ENCODE measurements at regions of chr1 and their contacts with region 1.

Region 1: GRCh38 chr1:203504397-203505250 is 10.7 kb downstream of the OPTC start:
- DNase-seq: peak; percentile 64
- H3K4me3 Mint-ChIP-seq: no peak overlapping the region
- H3K27ac Mint-ChIP-seq: no peak overlapping the region
- H3K4me1 Mint-ChIP-seq: peaks cover 7% of the 10 kb centered on the region
- H3K27me3 Mint-ChIP-seq: peaks cover 9% of the 10 kb centered on the region

Region 2: DNA sequence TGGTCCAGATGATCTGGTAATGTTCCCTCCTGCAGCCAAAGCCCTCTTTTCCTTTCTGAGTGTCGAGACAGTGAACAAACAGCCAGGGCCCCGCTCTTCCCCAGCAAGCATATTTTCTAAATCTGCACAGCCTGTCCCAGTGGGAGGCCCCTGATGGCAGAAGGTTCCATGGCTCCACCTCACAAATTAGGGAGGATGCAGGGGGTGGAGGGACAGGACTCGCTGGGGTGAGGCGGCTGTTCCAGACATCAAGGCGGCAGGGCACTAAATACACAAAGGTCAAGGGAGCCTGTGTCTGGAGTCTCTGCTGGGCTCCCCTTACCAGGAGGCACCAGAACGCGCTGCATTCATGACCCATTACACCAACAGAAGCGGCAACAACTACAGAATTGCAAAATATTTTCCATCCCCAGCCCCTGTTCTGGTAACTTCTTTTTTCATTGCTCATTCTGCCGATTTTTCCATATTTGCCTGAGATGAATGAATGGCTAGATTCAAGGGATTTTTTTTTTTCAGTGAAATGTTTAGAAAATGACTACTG is 56.0 kb before region 1 on chr1:
- intact Hi-C with region 1: no loop called
- DNase-seq: no peak
- H3K4me3 Mint-ChIP-seq: no peak overlapping the region
- H3K27ac Mint-ChIP-seq: no peak overlapping the region
- H3K4me1 Mint-ChIP-seq: no peaks in the 10 kb centered on the region
- H3K27me3 Mint-ChIP-seq: peaks cover 28% of the 10 kb centered on the region

Region 3: GRCh38 chr1:203702130-203702577 is 197.5 kb after region 1 on chr1:
- intact Hi-C with region 1: loop called (anchors 1 kb)
- DNase-seq: peak; percentile 36
- H3K4me3 Mint-ChIP-seq: no peak overlapping the region
- H3K27ac Mint-ChIP-seq: peak overlapping the region; percentile 59
- H3K4me1 Mint-ChIP-seq: peaks cover 12% of the 10 kb centered on the region
- H3K27me3 Mint-ChIP-seq: no peaks in the 10 kb centered on the region

Region 4: DNA sequence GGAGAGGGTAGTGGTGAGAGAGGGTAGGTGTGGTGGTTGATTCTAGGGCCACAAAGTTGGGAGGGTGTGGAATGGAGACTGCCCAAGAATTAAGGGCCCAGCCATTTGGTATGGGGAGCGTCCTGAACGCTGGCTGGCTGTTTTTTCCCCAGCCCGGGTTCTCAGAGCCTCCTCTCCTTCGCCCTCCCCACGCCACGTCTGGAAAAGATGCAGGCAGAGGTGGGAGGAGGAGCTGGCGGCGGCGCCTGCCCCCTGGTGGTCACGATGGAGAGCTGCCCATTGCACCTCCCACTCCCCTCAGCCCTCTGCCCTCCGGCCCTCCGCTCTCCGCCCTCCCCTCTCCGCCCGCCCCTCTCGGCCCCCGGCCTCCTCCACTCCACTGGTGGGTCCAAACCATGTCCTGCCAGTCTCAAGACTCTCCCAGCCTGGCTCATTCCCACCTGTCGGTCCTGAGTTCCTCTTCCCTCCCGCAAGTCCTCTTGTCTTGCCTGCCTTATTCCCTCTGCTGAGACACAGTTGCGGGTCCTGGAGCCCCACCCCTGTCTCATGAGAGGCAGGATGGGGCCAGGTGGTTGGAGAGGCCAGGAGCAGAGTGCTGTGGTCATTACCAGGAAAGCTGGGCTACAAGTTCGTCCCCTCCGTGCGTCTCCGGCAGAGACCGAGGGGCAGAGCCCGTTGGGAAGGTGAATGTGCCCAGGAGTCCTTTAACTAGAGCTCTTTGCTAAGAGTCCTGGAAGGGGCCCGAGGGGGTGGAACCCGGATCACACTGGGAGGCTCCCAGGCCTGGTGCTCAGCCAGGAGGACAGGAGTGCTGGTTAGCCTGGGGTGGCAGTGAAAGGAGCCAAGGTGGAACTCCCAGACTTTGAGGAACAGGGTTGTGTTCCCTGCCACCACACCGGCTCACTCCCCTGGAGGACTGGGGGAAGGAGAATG is 624.6 kb after region 1 on chr1:
- intact Hi-C with region 1: loop called (anchors 10 kb)
- DNase-seq: peak; percentile 53
- H3K4me3 Mint-ChIP-seq: no peak overlapping the region
- H3K27ac Mint-ChIP-seq: no peak overlapping the region
- H3K4me1 Mint-ChIP-seq: peaks cover 9% of the 10 kb centered on the region
- H3K27me3 Mint-ChIP-seq: no peaks in the 10 kb centered on the region